Activated CD4-positive, alpha-beta memory T cell treated with anti-CD3 and anti-CD28 coated beads for 36 hours (primary cell): ENCODE measurements at regions of chr6 and their contacts with region 1.

Region 1: GRCh38 chr6:89952686-89953085 is 58.4 kb downstream of the GJA10 start:
- DNase-seq: peak; percentile 72
- H3K4me3 Mint-ChIP-seq: peak overlapping the region; percentile 8
- H3K27ac Mint-ChIP-seq: peak overlapping the region; percentile 69
- H3K4me1 Mint-ChIP-seq: peaks cover 68% of the 10 kb centered on the region
- H3K27me3 Mint-ChIP-seq: no peaks in the 10 kb centered on the region

Region 2: GRCh38 chr6:89940225-89941027 is 12.3 kb before region 1 on chr6:
- CTCF ChIA-PET with region 1: interaction called, 26 read pairs
- POLR2A ChIA-PET with region 1: interaction called, 4 read pairs
- intact Hi-C with region 1: loop called (anchors 2 kb)
- DNase-seq: peak; percentile 78
- H3K4me3 Mint-ChIP-seq: no peak overlapping the region
- H3K27ac Mint-ChIP-seq: no peak overlapping the region
- H3K4me1 Mint-ChIP-seq: peaks cover 41% of the 10 kb centered on the region
- H3K27me3 Mint-ChIP-seq: no peaks in the 10 kb centered on the region

Region 3: DNA sequence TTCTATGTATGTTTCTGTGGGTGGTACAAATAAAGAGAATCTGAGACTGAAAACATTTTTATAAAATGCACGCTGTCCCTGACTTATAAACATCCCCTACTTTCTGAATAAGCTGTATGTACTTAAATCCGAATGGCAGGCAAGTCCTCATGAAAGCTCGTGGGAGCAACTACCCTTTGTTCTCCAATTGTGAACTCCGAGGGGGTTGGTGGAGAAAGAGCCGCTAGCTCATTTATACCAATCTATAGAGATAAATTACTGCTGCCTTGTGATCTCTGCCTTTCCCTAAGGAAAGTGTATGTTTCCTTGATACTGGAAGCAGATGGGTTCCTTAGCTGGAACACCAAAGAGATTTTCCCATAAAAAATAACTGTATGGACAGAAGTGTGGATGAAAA is 26.1 kb after region 1 on chr6:
- CTCF ChIA-PET with region 1: interaction called, 3 read pairs
- POLR2A ChIA-PET with region 1: no interaction called
- intact Hi-C with region 1: loop called (anchors 1 kb)
- DNase-seq: no peak
- H3K4me3 Mint-ChIP-seq: no peak overlapping the region
- H3K27ac Mint-ChIP-seq: no peak overlapping the region
- H3K4me1 Mint-ChIP-seq: peaks cover 16% of the 10 kb centered on the region
- H3K27me3 Mint-ChIP-seq: no peaks in the 10 kb centered on the region

Region 4: DNA sequence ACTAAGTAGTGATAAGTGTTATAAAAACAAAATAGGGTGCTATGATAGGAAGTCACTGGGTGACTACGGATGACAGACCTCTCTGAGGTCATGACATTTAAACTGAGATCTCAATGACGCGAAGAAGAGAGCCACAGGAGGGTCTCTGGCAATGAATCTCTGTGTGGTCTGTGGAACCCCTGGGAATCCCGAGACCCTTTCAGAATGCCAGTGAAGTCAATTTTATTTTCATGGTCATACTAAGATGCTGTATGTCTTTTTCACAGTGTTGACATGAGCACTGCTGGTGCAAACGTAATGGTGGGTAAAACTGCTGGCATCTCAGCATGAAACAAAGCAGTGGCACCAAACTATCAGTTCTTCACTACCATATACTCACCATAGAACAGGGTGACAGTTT is 96.6 kb after region 1 on chr6:
- CTCF ChIA-PET with region 1: no interaction called
- POLR2A ChIA-PET with region 1: no interaction called
- intact Hi-C with region 1: loop called (anchors 2 kb)
- DNase-seq: peak; percentile 44
- H3K4me3 Mint-ChIP-seq: peak overlapping the region; percentile 18
- H3K27ac Mint-ChIP-seq: peak overlapping the region; percentile 89
- H3K4me1 Mint-ChIP-seq: peaks cover 51% of the 10 kb centered on the region
- H3K27me3 Mint-ChIP-seq: no peaks in the 10 kb centered on the region